GM10248 (cell line): ENCODE measurements at regions of chrX and their contacts with region 1.

Region 1: DNA sequence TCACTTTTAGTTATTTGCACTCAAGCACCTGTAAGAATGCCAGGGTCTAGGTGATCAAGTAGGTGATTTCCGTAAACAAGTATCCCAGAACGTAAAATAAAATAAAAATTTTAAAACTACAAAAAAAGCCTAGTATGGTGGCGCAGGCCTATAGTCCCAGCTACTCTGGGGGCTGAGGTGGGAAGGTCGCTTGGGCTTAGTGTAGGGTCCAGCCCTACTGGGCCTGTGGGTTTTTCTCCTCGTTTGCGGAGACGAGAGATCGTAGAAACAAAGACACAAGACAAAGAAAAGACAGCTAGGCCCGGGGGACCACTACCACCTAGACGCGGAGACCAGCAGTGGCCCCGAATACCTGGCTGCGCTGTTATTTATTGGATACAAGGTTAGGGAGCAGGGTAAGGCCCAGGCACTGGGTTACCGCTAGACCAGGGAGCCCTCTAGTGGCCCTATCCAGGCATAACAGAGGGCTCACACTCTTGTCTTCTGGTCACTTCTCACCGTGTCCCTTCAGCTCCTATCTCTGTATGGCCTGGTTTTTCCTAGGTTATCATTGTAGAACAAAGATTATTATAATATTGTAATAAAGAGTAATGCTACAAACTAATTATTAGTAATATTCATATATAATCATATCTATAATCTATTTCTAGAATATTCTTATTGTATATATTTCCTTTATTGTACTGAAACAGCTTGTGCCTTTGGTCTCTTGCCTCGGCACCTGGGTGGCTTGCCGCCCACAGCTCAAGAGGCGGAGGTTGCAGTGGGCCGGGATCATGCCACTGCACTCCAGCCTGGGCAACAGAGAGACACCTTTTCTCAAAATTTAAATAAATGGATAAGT is 38.4 kb downstream of the SAGE1 start:
- DNase-seq: peak; percentile 9
- CTCF ChIP-seq: peak; percentile 50

Region 2: DNA sequence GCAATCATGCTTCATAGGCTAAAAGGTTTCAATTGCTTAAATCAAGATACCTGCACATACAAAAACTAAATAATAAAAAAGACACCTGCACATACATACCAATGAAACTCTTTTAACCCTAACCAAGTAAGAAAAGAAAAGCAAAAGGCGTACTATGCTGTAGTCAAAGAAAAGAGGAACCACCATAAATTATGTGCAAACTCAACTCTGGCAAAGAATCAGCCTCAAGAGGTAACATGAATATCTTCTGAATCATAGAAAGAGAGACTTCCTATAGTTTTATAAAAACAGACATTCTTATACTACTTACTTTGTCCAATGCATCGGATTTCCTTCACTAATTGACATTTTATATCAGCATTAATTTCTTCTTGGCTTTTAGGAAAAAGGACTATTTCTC is 12.6 kb after region 1 on chrX:
- CTCF ChIA-PET with region 1: interaction called, 12 read pairs
- POLR2A ChIA-PET with region 1: no interaction called
- DNase-seq: no peak
- CTCF ChIP-seq: no peak